ENCODE measurements at regions of chr7 and their contacts with region 1.

Region 1: DNA sequence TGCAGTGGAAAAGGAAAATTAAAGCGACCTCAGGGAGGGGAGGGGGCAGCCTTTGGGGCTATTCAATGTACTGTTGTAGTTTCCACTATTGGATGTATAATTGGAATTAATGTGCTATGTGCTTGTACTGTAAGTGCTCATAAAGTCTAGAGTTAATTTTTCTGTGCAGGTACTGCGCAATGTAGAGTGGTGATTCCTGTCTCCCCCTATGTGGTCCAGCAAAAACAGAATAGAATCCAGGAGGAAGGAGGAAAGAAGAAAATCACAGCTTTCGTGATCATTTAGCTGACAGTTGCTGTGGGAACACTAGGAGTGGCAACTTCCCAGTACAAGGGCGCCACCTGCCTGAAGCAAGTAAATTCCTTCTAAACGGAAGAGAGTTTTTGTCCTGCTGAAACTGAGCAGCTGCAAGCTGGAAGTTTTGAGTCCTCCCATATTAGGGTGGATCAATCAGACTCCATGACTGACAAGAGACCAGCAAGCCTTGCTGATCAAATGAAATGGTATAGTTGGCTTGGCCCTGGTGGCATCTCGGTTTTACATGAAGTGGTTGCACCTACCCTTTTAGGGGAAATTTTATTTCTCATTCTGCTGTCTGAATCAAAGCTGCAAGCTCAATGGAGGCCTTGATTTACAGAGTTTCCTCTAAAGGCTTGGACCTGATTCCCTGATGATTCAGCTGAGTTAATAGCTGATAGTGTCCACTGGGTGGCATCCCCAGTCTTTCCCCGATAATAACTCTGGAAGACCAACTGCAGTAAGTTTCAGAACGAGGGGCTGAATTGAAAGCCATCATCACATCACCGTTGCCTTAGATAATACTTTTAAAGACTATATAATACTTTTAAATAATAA is 299.8 kb downstream of the HGF start:
- DNase-seq: peak; percentile 63
- H3K4me3 Mint-ChIP-seq: no peak overlapping the region
- H3K27ac Mint-ChIP-seq: no peak overlapping the region
- H3K4me1 Mint-ChIP-seq: no peaks in the 10 kb centered on the region
- H3K27me3 Mint-ChIP-seq: no peaks in the 10 kb centered on the region

Region 2: GRCh38 chr7:80699045-80699638 is 771.0 kb before region 1 on chr7:
- intact Hi-C with region 1: loop called (anchors 1 kb)
- DNase-seq: no peak
- H3K4me3 Mint-ChIP-seq: no peak overlapping the region
- H3K27ac Mint-ChIP-seq: no peak overlapping the region
- H3K4me1 Mint-ChIP-seq: no peaks in the 10 kb centered on the region
- H3K27me3 Mint-ChIP-seq: no peaks in the 10 kb centered on the region